PC-3 (cell line): ENCODE measurements at regions of chr20 and their contacts with region 1.

Region 1: DNA sequence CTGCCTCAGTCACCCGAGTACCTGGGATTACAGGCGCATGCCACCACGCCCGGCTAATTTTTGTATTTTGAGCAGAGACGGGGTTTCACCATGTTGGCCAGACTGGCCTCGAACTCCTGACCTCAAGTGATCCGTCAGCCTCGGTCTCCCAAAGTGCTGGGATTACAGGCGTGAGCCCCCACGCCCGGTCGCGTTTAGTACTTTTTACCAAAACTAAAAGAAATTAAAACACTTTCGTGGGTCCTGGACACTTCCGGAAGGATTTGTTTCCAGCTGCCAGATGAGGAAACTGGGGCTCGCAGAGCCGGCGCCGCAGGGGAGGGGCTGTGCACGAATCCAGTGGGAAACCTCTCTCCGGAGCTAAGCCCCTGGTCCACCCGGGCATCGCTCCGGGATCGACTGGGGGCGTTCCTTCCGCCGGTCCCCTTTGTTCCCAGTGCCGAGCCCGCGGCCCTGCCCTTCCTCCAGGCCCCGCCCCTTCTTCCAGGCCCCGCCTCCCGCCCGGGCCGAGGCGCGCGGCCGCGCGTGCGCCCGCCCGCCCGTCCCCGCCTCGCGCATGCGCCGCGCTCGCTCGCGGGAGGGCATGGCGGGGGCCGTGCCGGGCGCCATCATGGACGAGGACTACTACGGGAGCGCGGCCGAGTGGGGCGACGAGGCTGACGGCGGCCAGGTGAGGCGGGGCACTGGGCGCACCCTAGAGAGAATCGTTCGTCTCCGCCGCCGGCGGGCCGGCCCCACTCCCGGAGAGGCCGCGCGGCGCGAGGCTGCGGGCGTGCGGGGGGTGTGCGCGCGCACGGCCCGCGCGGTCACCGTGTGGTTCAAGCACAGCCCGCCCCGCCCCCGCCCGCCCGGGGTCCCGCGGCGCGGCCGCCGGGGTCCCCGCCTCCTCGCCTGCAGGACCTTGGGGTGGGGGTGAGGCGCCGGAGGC is at the start of gene NELFCD:
- DNase-seq: peak; percentile 92
- ATAC-seq: peak; percentile 88
- H3K4me3 ChIP-seq: peak within 1 kb of the TSS; percentile 76
- H3K27ac ChIP-seq: peak within 1 kb of the TSS; percentile 24; the same call in 1 of the 2 replicates
- H3K4me1 ChIP-seq: peaks cover 7% of the 10 kb centered on the region; the same call in 1 of the 2 replicates
- H3K27me3 ChIP-seq: no peaks in the 10 kb centered on the region
- CTCF ChIP-seq: no peak
- total RNA-seq, gene NELFCD: 131 and 144 TPM in 2 replicates

Region 2: DNA sequence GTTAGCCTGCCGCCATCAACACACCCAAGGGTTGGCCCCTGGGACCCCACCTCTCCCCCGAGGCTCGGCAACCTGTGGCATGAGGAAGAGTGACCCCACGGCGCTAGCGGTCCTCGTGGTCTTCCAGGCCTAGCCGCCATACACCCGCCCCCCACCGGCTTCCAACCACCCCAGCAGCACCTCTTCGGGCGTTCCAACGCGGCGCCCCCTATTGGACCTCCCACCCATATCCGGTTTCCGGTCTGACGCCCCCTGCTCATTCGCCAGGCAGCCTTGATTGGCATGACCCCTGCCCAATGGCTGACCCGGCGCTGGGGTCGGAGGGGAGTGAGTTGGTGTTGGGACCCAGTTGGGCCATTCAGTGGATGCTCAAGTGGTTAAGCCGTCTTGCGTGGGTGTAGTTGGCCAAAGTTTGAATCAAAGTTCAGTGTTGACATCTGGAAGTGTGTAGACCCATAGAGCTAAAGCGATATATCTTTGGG is 130.2 kb before region 1 on chr20 and contains the start of gene GNAS-AS1:
- CTCF ChIA-PET with region 1: no interaction called
- POLR2A ChIA-PET with region 1: no interaction called
- intact Hi-C with region 1: no loop called
- DNase-seq: no peak
- ATAC-seq: no peak
- H3K4me3 ChIP-seq: no peak within 1 kb of the TSS
- H3K27ac ChIP-seq: no peak within 1 kb of the TSS
- H3K4me1 ChIP-seq: no peaks in the 10 kb centered on the region
- H3K27me3 ChIP-seq: peaks cover 37% of the 10 kb centered on the region
- CTCF ChIP-seq: no peak
- total RNA-seq, gene GNAS-AS1: 0.11 TPM in 1 of 2 replicates, not detected in the other

Region 3: DNA sequence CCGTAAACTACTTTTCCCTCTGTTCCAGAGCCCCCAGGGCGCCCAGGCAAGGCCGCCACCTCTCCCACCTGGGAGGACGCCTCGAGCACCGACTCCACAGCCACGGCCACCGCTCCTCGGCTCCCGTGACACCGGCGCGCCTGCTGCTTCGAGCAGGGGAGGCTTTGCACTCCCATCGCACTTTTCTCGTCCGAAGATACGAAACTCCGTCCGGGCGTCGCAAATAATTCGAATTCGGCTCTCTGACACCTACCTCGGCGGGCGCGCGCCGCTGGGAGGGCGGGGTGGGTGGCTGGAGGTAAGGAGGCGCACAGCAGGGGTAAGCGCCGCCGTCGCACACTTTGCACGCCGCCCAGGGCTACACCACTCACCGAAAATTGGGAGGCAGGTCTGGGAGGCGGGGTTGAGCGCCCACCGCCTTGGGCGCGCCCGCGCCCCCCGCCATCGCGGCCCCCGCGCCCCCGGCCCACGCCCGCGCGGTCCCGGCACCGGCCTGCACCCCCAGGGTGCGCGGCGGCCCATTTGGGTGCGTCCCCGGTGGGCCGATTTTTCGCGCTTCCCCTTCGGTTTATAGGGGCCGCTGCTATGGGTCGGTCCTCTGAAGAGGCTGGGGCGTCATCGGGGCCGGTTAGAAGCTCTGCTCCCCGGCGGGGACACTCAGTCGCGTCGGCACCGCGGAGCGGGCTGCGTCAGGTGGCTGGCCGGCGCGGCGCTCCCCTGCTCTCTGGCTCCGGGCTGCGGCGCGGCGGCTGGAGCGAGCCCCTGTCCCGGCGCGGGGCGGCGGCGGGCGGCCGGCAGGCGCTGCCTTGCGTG is 92.2 kb before region 1 on chr20:
- CTCF ChIA-PET with region 1: no interaction called
- POLR2A ChIA-PET with region 1: no interaction called
- intact Hi-C with region 1: loop called (anchors 5 kb)
- DNase-seq: peak; percentile 83
- ATAC-seq: peak; percentile 65
- H3K4me3 ChIP-seq: peak overlapping the region; percentile 81
- H3K27ac ChIP-seq: no peak overlapping the region
- H3K4me1 ChIP-seq: peaks cover 24% of the 10 kb centered on the region
- H3K27me3 ChIP-seq: no peaks in the 10 kb centered on the region
- CTCF ChIP-seq: no peak

Region 4: DNA sequence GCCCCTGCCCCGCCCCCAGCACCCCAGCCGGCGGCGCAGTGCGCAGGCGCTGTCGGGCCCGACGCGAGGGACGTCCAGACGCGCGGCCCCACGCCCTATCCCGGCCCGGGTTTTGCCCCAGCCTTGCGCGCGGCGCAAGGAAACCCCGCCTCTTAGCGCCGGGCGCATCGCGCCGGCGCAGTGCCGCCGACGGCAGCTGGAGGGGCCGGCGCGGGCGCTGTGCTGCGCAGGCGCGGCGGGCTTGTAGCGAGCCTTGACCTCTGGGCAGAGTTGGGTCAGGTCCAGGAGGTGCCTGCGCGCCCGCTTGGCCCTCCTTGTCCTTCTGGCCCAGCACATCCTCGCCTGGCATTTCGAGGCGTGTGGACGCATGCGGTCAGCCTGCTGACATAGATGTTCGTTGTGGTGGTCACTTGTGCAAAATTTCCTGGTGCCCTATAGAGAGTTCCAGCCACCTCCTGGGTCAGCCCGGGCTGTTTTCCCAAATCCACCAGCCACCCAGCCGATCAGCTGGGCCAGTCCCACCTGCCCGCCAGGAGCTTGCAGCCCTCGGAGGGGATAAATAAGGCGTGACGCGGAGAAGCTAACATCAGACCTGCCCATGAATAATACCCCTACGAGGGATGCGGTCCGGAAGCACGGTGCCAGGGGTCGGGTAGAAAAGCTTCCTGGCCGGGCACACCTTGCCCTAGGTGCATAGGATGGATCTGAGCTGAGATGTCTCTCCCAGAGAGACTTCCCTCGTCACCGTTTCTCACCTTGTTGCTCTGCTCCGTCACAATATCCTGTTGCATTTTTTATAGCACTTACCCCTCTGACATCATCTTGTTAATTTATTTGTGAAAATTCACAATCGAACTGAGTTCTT is 62.1 kb after region 1 on chr20:
- CTCF ChIA-PET with region 1: no interaction called
- POLR2A ChIA-PET with region 1: no interaction called
- intact Hi-C with region 1: loop called (anchors 1 kb)
- DNase-seq: peak; percentile 99
- ATAC-seq: peak; percentile 93
- H3K4me3 ChIP-seq: peak overlapping the region; percentile 72
- H3K27ac ChIP-seq: peak overlapping the region; percentile 87
- H3K4me1 ChIP-seq: peaks cover 55% of the 10 kb centered on the region
- H3K27me3 ChIP-seq: no peaks in the 10 kb centered on the region
- CTCF ChIP-seq: no peak

Region 5: DNA sequence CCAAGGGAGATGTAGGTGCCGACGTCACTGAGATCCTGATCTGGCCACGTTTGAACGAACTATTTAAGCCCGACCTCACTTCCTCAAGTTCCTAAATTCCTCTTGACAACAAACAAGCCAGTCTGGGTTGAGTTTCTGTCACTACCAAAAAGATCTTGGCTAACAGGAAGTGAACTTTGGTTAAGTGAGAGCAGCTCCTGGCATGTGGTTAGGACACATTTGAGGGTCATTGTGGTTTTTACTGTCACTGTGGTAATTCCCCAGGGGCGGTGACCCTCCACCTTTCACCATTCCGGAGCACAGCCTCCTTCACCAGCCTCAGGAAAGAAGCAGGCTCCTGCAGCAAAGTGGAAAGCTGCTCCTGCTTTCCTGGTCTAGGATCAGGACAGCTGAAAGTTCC is 139.5 kb after region 1 on chr20:
- CTCF ChIA-PET with region 1: no interaction called
- POLR2A ChIA-PET with region 1: no interaction called
- intact Hi-C with region 1: no loop called
- DNase-seq: no peak
- ATAC-seq: no peak
- H3K4me3 ChIP-seq: no peak overlapping the region
- H3K27ac ChIP-seq: no peak overlapping the region
- H3K4me1 ChIP-seq: no peaks in the 10 kb centered on the region
- H3K27me3 ChIP-seq: peaks cover 97% of the 10 kb centered on the region
- CTCF ChIP-seq: no peak